ENCODE measurements at regions of chr7 and their contacts with region 1.

Region 1: GRCh38 chr7:3154912-3155494 is 111.3 kb upstream of the CARD11 start:
- DNase-seq: peak; percentile 60
- H3K4me3 ChIP-seq: no peak overlapping the region
- H3K27ac ChIP-seq: no peak overlapping the region
- H3K4me1 ChIP-seq: no peaks in the 10 kb centered on the region
- H3K27me3 ChIP-seq: peaks cover 0 to 4% (median 0%) of the 10 kb centered on the region in 3 donors
- CTCF ChIP-seq: peak; percentile 47 to 71 (median 59)
- EP300 ChIP-seq: no peak
- POLR2A ChIP-seq: no peak

Region 2: GRCh38 chr7:2864999-2865670 is 289.9 kb before region 1 on chr7:
- intact Hi-C with region 1: loop called (anchors 1 kb)
- DNase-seq: peak; percentile 85
- H3K4me3 ChIP-seq: no peak overlapping the region
- H3K27ac ChIP-seq: no peak overlapping the region
- H3K4me1 ChIP-seq: peaks cover 0 to 20% (median 17%) of the 10 kb centered on the region in 4 donors
- H3K27me3 ChIP-seq: no peaks in the 10 kb centered on the region
- CTCF ChIP-seq: peak; percentile 76 to 95 (median 88)
- EP300 ChIP-seq: no peak
- POLR2A ChIP-seq: no peak

Region 3: GRCh38 chr7:2886900-2887299 is 268.1 kb before region 1 on chr7:
- intact Hi-C with region 1: loop called (anchors 2 kb)
- DNase-seq: no peak
- H3K4me3 ChIP-seq: no peak overlapping the region
- H3K27ac ChIP-seq: no peak overlapping the region
- H3K4me1 ChIP-seq: peaks cover 0 to 6% (median 2%) of the 10 kb centered on the region in 4 donors
- H3K27me3 ChIP-seq: no peaks in the 10 kb centered on the region
- CTCF ChIP-seq: peak; percentile 45 to 70 (median 57)
- EP300 ChIP-seq: no peak
- POLR2A ChIP-seq: no peak